Common myeloid progenitor, CD34-positive (primary cell): ENCODE measurements at regions of chr5 and their contacts with region 1.

Region 1: DNA sequence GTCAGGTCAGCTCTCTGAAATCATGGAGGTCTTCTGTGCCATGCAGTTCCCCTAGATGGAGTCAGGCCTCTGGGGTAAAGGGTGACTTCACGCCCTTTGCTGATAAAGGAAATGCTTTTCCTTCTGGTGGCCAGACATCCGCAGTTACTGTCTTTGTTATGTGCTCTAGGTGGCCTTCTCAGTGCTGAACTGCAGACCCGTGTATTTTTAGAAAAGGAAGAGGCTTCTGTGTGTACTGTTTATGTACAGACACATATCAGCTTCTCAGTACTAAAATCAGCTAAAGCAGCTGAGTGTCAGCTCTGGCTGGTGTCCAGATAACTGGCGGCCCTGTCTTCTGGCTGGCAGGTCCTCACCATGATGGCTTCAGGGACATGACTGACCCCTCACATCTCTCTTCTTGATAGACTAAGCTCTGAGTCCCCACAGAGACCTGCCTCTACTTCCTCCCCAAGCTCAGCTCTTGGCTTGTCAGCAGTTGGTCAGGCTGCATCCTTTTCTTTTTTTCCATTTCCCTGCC is 75.3 kb downstream of the ARHGAP26 start:
- DNase-seq: peak in 2 of 3 donors; percentile 21 to 38
- H3K4me3 ChIP-seq: no peak overlapping the region
- H3K27ac ChIP-seq: peak overlapping the region in 1 of 2 experiments; percentile 50
- H3K4me1 ChIP-seq: peaks cover 12 to 34% (median 25%) of the 10 kb centered on the region in 4 experiments
- H3K27me3 ChIP-seq: no peaks in the 10 kb centered on the region

Region 2: GRCh38 chr5:142860270-142860669 is 14.8 kb after region 1 on chr5:
- CTCF ChIA-PET with region 1: interaction called, 11 read pairs
- POLR2A ChIA-PET with region 1: no interaction called
- DNase-seq: peak in 2 of 3 donors; percentile 26 to 38
- H3K4me3 ChIP-seq: no peak overlapping the region
- H3K27ac ChIP-seq: no peak overlapping the region
- H3K4me1 ChIP-seq: peaks cover 0 to 18% (median 8%) of the 10 kb centered on the region in 4 experiments
- H3K27me3 ChIP-seq: no peaks in the 10 kb centered on the region

Region 3: DNA sequence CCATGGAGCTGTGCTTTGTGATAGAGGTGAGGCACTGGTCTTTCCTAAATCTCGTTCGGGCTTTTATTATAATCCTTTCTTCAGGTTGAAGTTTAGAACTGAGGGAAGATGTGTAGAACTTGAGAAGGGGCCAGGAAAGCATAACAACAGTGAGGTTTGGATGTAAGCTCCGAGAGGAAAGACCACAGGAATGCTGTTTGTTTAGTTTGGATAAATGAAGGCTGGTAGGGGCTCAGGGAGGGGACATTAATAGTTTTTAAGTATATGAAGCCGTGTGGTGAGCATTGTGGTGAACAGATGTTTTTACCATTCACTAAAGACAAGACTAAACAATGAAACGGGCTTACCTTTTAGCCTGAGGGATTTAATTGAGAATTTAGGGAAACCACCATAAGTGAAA is 55.5 kb after region 1 on chr5:
- CTCF ChIA-PET with region 1: no interaction called
- POLR2A ChIA-PET with region 1: no interaction called
- DNase-seq: no peak
- H3K4me3 ChIP-seq: no peak overlapping the region
- H3K27ac ChIP-seq: no peak overlapping the region
- H3K4me1 ChIP-seq: peaks cover 0 to 6% (median 0%) of the 10 kb centered on the region in 4 experiments
- H3K27me3 ChIP-seq: no peaks in the 10 kb centered on the region

Region 4: DNA sequence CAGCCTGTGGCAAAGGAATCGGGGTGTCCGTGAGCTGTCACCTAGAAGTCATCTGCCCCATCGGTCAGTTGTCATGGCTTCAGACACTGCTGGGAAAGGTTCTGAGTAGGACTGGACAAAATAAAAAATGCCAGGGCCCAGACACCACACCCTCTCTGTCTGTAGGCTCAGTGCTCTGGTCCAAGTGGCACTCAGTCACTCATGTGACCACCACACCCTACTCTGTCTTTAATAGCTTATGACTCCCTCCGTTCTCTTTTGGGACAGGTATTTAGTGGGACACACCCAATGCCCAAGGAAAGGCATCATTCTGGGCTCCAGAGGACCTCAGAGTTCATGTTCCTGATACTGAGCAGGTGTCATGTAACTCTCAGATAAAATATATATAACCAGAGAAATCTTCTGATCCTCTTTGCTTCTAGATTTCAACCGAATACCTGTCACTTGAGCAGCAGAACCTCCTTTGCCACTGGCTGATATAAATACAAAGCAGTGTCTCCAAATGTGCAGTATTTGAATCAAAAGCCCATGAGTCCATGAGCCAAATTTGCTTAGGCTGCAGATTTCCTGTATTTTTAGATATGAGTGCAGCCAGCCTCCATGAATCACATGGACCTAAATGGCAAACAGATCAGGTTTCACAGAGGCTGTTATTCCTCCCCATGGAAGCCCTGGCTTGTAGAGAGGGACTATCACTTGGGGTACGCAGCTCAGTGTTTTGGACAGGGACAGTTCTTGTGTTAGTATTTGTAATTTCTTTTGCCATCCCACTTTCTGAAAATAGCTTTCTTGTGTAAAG is 196.7 kb after region 1 on chr5:
- CTCF ChIA-PET with region 1: no interaction called
- POLR2A ChIA-PET with region 1: no interaction called
- DNase-seq: no peak
- H3K4me3 ChIP-seq: no peak overlapping the region
- H3K27ac ChIP-seq: no peak overlapping the region
- H3K4me1 ChIP-seq: peaks cover 0 to under 1% (median 0%) of the 10 kb centered on the region in 4 experiments
- H3K27me3 ChIP-seq: no peaks in the 10 kb centered on the region